SK-N-SH (cell line): ENCODE measurements at regions of chr16 and their contacts with region 1.

Region 1: GRCh38 chr16:80948886-80949493 is 57.7 kb downstream of the CMC2 start:
- DNase-seq: peak; percentile 44
- H3K4me3 ChIP-seq: no peak overlapping the region
- H3K27ac ChIP-seq: no peak overlapping the region
- H3K4me1 ChIP-seq: no peaks in the 10 kb centered on the region
- H3K27me3 ChIP-seq: no peaks in the 10 kb centered on the region
- CTCF ChIP-seq: peak; percentile 73
- EP300 ChIP-seq: no peak
- RAD21 ChIP-seq: peak; percentile 69

Region 2: GRCh38 chr16:80924372-80924978 is 24.5 kb before region 1 on chr16:
- CTCF ChIA-PET with region 1: interaction called, 10 read pairs
- POLR2A ChIA-PET with region 1: no interaction called
- DNase-seq: peak; percentile 61
- H3K4me3 ChIP-seq: no peak overlapping the region
- H3K27ac ChIP-seq: no peak overlapping the region
- H3K4me1 ChIP-seq: no peaks in the 10 kb centered on the region
- H3K27me3 ChIP-seq: no peaks in the 10 kb centered on the region
- CTCF ChIP-seq: peak; percentile 75
- EP300 ChIP-seq: no peak
- RAD21 ChIP-seq: peak; percentile 64

Region 3: DNA sequence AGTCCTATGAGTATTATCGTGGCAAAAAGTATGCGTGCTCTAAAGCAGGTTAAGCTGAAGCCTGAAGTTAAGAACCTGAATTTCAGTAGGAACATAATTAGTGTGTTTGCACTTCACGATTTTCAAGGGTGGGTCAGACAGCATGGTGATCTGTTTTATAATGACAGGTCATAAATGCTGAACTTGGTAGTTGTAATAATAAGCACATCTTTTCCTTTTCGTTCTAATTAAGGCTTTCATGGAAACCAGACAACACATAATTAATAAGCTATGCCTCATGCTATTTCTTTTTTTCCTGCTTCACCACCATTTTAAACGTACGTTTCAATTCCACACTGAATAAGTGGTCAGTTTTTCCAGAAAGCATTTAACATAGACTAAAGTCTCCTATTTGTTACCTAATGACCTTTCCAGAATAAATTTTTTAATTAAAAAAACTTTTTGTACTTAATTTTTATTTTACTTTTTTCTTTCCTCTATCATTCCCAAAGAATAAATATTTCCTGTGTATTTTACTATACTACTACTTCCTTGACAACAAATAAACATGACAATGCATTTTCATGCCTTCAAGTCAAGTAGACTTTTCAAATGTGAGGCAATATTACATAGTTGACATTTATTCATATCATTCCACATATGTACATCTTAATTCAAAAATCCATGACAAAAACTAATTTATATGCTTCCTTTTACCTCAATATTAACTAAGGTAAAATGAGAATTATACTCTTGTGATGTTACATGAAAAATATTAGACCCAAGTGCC is 35.3 kb after region 1 on chr16:
- CTCF ChIA-PET with region 1: no interaction called
- POLR2A ChIA-PET with region 1: no interaction called
- DNase-seq: no peak
- H3K4me3 ChIP-seq: no peak overlapping the region
- H3K27ac ChIP-seq: no peak overlapping the region
- H3K4me1 ChIP-seq: peaks cover 0 to 2% of the 10 kb centered on the region in 2 experiments; a peak in 1 of 4 replicates
- H3K27me3 ChIP-seq: no peaks in the 10 kb centered on the region
- CTCF ChIP-seq: no peak
- EP300 ChIP-seq: no peak
- RAD21 ChIP-seq: no peak

Region 4: GRCh38 chr16:81158964-81159363 is 210.0 kb after region 1 on chr16:
- CTCF ChIA-PET with region 1: no interaction called
- POLR2A ChIA-PET with region 1: no interaction called
- DNase-seq: no peak
- H3K4me3 ChIP-seq: no peak overlapping the region
- H3K27ac ChIP-seq: no peak overlapping the region
- H3K4me1 ChIP-seq: no peaks in the 10 kb centered on the region
- H3K27me3 ChIP-seq: no peaks in the 10 kb centered on the region; the same call in 1 of the 2 replicates
- CTCF ChIP-seq: no peak
- EP300 ChIP-seq: no peak
- RAD21 ChIP-seq: no peak